ENCODE measurements at regions of chr9 and their contacts with region 1.

Region 1: GRCh38 chr9:37485389-37486219 is at the start of gene POLR1E:
- DNase-seq: peak; percentile 99
- ATAC-seq: peak; percentile 98
- H3K4me3 Mint-ChIP-seq: peak within 1 kb of the TSS; percentile 92
- H3K27ac Mint-ChIP-seq: peak within 1 kb of the TSS; percentile 85
- H3K4me1 Mint-ChIP-seq: peaks cover 31% of the 10 kb centered on the region
- H3K27me3 Mint-ChIP-seq: no peaks in the 10 kb centered on the region
- CTCF ChIP-seq: no peak
- total RNA-seq, gene POLR1E: 45.4 and 46.3 TPM in 2 replicates

Region 2: DNA sequence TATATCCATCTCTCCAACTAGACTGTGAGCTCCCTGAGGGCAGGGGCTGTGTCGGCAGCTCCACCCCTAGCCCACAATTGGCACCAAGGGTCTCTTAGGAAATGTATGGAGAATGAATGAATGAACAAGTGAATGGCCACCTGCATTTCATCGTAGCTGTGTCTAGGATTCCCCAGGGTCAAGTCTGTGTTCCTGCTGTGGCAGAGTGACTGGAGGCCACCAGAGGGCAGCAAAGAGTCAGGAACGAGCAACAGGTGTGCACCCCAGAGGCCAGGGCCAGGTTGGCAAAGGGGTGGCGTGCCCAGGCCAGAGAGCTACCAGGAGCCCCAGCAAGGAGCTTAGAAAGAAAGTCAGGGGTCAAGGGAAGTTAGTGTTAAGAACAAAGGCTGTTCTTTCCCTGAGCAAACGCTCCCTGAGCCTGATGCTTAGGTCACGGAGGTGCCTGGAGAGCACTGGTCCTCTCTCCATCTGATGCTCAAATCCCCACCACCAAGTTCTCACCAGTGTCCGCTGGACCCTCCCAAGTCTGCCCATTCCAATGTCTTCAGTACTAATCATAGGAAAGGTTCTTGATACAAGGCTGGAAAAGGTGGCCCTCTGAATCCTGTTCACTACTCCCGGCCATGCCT is 612.2 kb before region 1 on chr9:
- CTCF ChIA-PET with region 1: no interaction called
- POLR2A ChIA-PET with region 1: no interaction called
- intact Hi-C with region 1: loop called (anchors 5 kb)
- DNase-seq: peak; percentile 52
- ATAC-seq: peak; percentile 77
- H3K4me3 Mint-ChIP-seq: no peak overlapping the region
- H3K27ac Mint-ChIP-seq: peak overlapping the region; percentile 87
- H3K4me1 Mint-ChIP-seq: peaks cover 63% of the 10 kb centered on the region
- H3K27me3 Mint-ChIP-seq: no peaks in the 10 kb centered on the region
- CTCF ChIP-seq: no peak

Region 3: GRCh38 chr9:37528652-37529510 is 43.3 kb after region 1 on chr9:
- CTCF ChIA-PET with region 1: no interaction called
- POLR2A ChIA-PET with region 1: no interaction called
- intact Hi-C with region 1: loop called (anchors 2 kb)
- DNase-seq: peak; percentile 43
- ATAC-seq: peak; percentile 72
- H3K4me3 Mint-ChIP-seq: peak overlapping the region; percentile 57
- H3K27ac Mint-ChIP-seq: peak overlapping the region; percentile 76
- H3K4me1 Mint-ChIP-seq: peaks cover 38% of the 10 kb centered on the region
- H3K27me3 Mint-ChIP-seq: no peaks in the 10 kb centered on the region
- CTCF ChIP-seq: no peak

Region 4: DNA sequence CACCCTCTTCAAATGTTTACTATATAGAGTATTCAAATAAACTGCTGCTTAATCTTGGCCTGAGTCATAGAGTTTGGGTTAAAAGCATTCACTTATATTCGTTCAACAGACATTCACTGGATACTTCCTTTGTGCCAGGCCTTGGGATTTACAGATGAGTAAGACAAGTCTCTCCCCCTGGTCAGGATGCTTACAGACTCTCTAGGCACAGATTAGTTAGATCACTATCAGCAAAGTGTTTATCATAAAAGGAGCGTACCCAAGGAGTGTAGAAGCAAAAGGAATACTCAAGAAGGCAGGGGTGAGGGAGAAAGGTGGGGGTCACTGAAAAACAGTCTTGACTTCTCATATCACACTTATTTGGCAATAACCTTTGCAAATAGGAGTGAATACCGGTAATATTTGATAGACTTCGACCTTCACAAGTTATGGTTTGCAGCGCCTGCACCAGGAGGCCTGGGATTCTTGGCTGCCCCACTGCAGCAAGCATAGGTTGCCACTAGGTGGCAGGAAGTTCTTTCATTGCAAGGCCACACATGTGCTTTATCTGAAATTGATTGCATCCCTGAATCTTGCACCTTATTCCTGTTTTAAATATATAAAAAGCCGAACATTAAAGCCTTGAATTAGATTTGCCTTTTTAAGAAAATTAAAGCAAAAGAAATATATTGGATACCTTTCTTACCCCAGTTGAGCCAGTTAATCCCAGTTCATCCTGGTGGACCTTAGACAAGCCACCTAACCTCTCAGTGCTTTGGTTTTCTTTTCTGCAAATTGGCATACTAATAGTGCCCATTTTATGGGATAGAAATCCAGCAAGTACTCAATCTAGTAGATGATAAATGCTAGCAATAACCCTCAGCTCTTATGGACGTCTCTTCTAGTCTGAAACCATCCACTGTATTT is 261.5 kb after region 1 on chr9:
- CTCF ChIA-PET with region 1: no interaction called
- POLR2A ChIA-PET with region 1: no interaction called
- intact Hi-C with region 1: loop called (anchors 2 kb)
- DNase-seq: peak; percentile 27
- ATAC-seq: peak; percentile 81
- H3K4me3 Mint-ChIP-seq: no peak overlapping the region
- H3K27ac Mint-ChIP-seq: no peak overlapping the region
- H3K4me1 Mint-ChIP-seq: no peaks in the 10 kb centered on the region
- H3K27me3 Mint-ChIP-seq: no peaks in the 10 kb centered on the region
- CTCF ChIP-seq: peak; percentile 28

Region 5: DNA sequence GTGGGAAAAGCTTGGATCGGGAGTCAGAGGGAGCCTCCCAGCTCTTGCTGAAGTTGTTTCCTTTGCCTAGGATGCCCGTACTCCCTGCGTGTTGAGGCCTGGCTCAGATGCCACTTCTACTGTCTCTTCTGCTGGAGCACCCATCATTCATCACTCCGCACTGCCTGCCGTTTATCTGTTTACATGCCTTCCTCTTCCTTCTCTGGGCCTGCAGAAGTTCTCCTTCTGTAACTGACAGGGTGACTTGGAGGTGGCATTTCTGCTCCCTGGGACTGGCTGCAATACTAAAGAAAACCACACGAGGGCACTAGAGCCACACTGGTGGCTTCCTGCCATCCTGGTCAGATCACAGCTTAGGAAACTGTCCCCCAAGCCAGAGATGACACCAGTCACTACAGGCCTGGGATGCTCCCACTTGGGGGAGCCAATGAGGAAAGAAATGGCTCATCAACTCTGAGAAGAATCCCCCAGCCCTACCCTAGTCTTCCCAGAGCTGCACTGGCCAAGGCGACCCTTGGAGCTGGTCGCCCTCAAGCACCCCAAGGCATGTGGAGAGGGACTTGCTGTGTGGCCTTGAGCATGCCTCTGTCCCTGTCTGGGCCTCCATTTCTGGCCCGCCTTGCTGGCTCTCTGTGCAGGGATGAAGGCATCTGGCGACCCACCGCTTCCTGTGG is 428.0 kb after region 1 on chr9:
- CTCF ChIA-PET with region 1: no interaction called
- POLR2A ChIA-PET with region 1: no interaction called
- intact Hi-C with region 1: loop called (anchors 1 kb)
- DNase-seq: peak; percentile 71
- ATAC-seq: peak; percentile 93
- H3K4me3 Mint-ChIP-seq: no peak overlapping the region
- H3K27ac Mint-ChIP-seq: no peak overlapping the region
- H3K4me1 Mint-ChIP-seq: peaks cover 2% of the 10 kb centered on the region
- H3K27me3 Mint-ChIP-seq: no peaks in the 10 kb centered on the region
- CTCF ChIP-seq: peak; percentile 37

Measured in activated B cell treated with CpG ODN at 0.5 μM for 24 hours (primary cell).